Activated naive CD4-positive, alpha-beta T cell treated with anti-CD3 and anti-CD28 coated beads for 36 hours (primary cell): ENCODE measurements at regions of chr13 and their contacts with region 1.

Region 1: GRCh38 chr13:21176220-21176982 is at the starts of genes MRPL57 and SKA3:
- DNase-seq: peak; percentile 92
- H3K4me3 Mint-ChIP-seq: peak within 1 kb of the TSS; percentile 99
- H3K27ac Mint-ChIP-seq: peak within 1 kb of the TSS; percentile 97
- H3K4me1 Mint-ChIP-seq: peaks cover 24% of the 10 kb centered on the region
- H3K27me3 Mint-ChIP-seq: no peaks in the 10 kb centered on the region
- total RNA-seq, gene MRPL57: 19.0 to 21.0 TPM
- total RNA-seq, gene SKA3: 32.8 to 33.8 TPM

Region 2: DNA sequence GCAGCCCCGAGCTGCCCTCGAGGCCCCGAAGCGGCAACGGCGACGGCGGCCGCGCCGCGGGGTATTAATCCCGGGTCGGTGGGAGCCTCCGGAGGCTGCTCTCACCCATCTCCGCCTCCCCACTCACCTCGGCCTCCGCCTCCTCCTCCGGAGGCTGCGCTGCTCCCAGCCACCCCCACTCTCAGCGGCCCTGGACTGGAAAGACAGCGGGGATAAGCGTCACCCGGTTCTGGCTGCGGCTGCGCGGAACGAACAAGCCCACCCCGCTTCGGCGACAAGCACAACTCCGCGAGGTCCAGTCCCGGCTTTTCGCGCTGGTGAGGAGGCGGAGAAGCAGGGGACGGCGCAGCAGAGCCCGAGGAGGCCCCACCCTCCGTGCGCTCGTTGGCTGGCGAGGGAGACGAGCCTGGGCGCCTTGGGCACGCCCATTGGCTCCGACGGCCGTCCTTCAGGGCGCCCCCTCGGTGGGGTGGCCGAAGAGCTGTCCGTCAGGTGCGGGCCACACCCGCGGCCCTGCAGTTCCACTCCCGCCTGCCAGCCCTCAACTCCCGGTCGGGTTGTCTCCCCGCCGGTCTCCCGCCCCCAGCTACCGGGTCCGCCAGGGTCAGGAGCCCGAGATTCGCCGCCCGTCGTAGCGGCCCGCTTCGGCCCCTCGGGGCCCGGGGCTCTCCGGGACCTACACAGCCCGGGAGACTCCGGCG is 1312.9 kb before region 1 on chr13 and contains the start of gene ZMYM5:
- CTCF ChIA-PET with region 1: no interaction called
- intact Hi-C with region 1: loop called (anchors 5 kb)
- DNase-seq: peak; percentile 98
- H3K4me3 Mint-ChIP-seq: peak within 1 kb of the TSS; percentile 94
- H3K27ac Mint-ChIP-seq: peak within 1 kb of the TSS; percentile 95
- H3K4me1 Mint-ChIP-seq: peaks cover 37% of the 10 kb centered on the region
- H3K27me3 Mint-ChIP-seq: no peaks in the 10 kb centered on the region
- total RNA-seq, gene ZMYM5: 8.1 to 8.5 TPM

Region 3: DNA sequence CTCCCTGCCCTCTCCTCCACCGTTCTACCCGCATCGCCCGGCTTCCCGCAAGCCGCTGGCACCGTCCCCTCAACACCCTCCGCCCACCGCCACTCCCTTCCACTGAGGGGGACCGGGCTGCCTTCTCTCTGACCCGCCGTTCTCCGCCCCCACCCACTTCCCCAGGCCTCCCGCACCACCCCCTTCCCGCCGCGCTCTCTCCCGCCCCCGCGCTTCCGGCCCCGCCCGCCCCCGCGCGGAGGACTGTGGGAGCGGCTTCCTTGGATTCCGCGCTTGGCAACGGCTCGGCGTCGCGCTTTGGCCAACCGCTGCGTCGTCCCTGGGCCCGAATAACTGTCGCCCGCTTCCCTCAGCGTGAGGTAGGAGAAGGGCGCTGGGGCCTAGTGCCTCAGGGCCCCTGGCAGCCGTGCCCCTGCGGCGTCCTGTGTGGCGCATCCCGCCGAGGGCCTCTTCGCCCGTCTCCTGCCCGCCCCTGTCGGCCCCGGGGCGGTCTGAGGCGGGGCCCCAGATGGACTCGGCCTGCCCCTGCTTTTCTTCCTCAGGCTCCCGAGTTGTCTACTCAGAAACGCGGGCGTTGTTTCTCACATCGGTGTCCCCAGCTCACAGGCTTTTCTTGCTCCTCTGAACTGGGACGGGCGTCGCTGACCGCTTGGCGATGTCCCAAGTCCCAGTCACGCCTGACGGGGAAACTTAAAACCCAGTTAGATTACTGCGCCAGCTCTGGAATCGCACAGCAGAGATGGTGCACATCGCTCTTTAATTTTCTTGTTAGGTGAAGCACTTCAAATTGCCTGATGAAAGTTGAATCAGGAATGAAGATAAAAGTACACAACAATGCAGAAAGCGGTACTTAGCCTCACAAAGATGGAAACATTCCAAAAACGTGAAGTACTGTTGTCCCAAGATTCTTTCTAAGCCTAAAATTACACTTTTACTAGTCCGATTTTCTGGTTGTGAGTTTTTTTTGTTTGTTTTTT is 609.2 kb before region 1 on chr13 and contains the start of gene IFT88:
- CTCF ChIA-PET with region 1: no interaction called
- intact Hi-C with region 1: loop called (anchors 5 kb)
- DNase-seq: peak; percentile 86
- H3K4me3 Mint-ChIP-seq: peak within 1 kb of the TSS; percentile 84
- H3K27ac Mint-ChIP-seq: peak within 1 kb of the TSS; percentile 87
- H3K4me1 Mint-ChIP-seq: peaks cover 23% of the 10 kb centered on the region
- H3K27me3 Mint-ChIP-seq: no peaks in the 10 kb centered on the region
- total RNA-seq, gene IFT88: 2.7 TPM

Region 4: DNA sequence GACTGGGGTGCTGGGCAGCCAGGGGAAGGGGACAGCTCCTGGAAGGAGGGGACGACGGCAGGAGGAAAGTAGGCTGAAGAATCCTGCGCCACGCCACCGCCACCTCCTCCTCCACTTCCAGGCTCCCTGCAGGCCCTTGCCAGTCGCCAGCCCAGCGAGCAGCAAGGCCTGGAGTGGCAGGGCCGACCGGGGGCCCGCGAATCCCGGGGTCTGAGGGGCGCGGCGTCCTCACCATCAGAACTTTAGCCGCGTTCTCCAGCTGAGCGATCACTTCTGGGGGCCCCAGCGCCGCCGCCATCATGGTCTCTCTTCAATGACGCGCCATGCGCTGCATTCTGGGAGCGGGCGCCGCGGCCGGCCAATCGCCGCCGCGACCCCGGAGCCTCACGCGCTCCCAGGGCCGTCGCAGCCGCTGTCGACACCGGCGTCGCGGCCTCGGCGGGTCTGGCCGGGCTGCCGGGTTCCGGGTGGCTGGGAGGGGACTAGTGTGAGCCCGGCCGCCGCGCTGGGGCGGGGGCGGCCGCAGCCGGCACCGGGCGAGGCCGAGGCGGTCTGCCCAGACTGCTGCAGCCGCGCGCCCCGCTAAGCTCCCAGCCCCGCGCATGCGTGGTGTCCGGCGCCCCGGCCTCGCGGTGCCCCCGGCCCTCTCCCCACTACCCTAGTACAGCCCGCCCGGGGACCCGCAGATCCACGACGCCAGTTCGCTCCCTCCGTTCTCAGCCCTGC is 273.8 kb before region 1 on chr13 and contains the start of gene XPO4:
- CTCF ChIA-PET with region 1: no interaction called
- intact Hi-C with region 1: loop called (anchors 1 kb)
- DNase-seq: peak; percentile 83
- H3K4me3 Mint-ChIP-seq: peak within 1 kb of the TSS; percentile 95
- H3K27ac Mint-ChIP-seq: peak within 1 kb of the TSS; percentile 95
- H3K4me1 Mint-ChIP-seq: peaks cover 29% of the 10 kb centered on the region
- H3K27me3 Mint-ChIP-seq: no peaks in the 10 kb centered on the region
- total RNA-seq, gene XPO4: 20.4 to 21.2 TPM

Region 5: DNA sequence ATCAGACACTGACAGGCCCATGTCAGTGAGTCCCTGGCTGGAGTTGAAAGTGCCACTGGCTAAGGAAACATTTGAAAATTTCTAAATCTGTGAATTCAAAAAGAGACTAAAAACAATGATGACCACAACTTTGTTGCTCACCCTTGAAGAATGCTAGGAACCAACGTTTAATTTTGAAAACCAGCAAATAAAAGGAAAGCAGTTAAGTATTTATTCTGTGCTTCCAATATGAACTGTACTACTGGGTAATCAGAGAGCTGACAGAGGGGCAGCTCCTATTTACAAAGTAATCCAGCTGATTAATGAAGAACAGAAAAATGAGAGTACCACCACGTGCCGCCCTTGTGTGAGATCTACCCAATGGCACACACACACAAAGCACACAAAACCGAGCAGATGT is 70.3 kb before region 1 on chr13:
- CTCF ChIA-PET with region 1: interaction called, 11 read pairs
- intact Hi-C with region 1: loop called (anchors 1 kb)
- DNase-seq: no peak
- H3K4me3 Mint-ChIP-seq: no peak overlapping the region
- H3K27ac Mint-ChIP-seq: no peak overlapping the region
- H3K4me1 Mint-ChIP-seq: no peaks in the 10 kb centered on the region
- H3K27me3 Mint-ChIP-seq: no peaks in the 10 kb centered on the region

Region 6: DNA sequence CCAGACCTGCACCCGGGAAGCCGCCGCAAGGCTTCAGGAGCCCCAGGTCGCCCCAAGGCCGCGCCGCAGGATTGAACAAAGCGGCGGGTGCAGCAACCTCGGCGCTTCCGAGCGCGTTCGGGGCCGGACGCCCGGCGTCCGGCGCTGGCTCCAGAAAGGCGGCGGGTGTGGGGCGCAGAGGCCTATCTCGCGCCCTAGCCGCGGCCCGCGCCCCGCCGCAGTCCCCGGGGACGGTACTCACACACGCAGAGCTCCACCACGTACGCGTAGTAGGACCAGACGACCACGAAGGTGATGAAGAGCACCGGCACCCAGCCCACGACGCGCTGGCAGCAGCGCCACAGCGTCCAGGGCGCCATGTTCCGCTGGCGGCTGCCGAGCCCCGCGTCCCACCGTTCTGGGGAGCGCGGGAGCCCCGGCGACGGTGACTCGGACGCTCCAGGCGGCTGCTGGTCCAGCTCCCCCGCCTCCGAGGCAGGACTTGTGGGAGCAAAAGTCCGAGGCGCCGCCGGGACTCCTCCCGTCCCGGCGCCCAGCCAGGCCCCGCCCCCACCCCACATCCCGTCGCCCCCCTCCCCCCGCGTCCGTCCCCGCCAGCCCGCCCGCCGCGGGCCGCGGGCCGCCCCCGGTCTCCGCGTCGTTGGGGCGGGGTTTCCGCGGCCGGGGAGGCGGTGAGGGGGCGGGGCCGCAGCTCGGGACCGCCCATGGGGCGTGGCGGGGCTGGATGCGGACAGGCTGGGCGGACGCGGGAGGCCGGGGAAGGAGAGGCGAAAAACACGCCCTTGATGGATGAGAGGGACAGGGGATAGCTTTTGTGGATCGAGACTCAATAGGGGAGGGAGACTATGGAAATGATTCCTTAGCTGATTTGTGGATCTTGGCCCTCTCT is 282.7 kb after region 1 on chr13 and contains the start of gene ZDHHC20:
- CTCF ChIA-PET with region 1: no interaction called
- intact Hi-C with region 1: loop called (anchors 1 kb)
- DNase-seq: peak; percentile 89
- H3K4me3 Mint-ChIP-seq: peak within 1 kb of the TSS; percentile 92
- H3K27ac Mint-ChIP-seq: peak within 1 kb of the TSS; percentile 88
- H3K4me1 Mint-ChIP-seq: peaks cover 29% of the 10 kb centered on the region
- H3K27me3 Mint-ChIP-seq: no peaks in the 10 kb centered on the region
- total RNA-seq, gene ZDHHC20: 48.0 to 50.7 TPM

Region 7: DNA sequence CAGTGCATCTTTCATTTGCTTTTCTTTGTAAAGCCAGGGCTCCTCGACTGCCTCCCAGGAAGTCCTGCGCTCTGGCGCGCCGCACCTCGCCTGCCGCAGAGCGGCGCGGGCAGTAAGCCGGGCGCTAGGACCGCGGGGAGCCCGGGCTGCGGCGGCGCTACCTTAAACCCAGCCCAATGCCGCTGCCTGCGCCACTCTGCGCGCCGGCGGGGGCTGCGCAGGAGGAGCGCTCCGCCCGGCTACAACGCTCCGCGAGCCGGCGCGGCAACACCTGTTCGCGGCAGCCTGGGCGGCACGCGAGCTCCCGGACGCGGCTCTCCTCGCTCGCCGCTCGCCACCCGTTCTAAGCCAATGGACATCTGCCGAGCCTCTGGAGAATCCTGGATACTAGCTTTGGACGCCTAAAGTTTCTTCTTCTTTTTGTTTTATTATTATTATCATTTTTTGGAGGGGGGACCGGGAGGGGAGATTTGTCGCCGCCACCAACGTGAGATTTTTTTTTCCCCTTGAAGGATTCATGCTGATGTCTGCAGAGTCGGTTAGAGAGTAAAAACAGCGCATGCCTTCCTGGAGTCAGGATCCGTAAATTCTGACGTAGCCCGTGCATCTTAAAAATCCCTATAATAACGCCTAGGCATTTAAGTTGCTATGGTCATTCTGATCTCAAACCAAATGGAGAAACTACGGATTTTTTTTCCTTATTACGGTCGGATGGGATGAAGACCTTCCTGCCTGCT is 494.6 kb after region 1 on chr13 and contains the start of gene FGF9:
- CTCF ChIA-PET with region 1: interaction called, 4 read pairs
- intact Hi-C with region 1: loop called (anchors 2 kb)
- DNase-seq: peak; percentile 79
- H3K4me3 Mint-ChIP-seq: peak within 1 kb of the TSS; percentile 80
- H3K27ac Mint-ChIP-seq: no peak within 1 kb of the TSS
- H3K4me1 Mint-ChIP-seq: peaks cover 34% of the 10 kb centered on the region
- H3K27me3 Mint-ChIP-seq: peaks cover 32% of the 10 kb centered on the region
- total RNA-seq, gene FGF9: not detected